Activated CD8-positive, alpha-beta T cell treated with anti-CD3 and anti-CD28 coated beads for 36 hours (primary cell): ENCODE measurements at regions of chr14 and their contacts with region 1.

Region 1: DNA sequence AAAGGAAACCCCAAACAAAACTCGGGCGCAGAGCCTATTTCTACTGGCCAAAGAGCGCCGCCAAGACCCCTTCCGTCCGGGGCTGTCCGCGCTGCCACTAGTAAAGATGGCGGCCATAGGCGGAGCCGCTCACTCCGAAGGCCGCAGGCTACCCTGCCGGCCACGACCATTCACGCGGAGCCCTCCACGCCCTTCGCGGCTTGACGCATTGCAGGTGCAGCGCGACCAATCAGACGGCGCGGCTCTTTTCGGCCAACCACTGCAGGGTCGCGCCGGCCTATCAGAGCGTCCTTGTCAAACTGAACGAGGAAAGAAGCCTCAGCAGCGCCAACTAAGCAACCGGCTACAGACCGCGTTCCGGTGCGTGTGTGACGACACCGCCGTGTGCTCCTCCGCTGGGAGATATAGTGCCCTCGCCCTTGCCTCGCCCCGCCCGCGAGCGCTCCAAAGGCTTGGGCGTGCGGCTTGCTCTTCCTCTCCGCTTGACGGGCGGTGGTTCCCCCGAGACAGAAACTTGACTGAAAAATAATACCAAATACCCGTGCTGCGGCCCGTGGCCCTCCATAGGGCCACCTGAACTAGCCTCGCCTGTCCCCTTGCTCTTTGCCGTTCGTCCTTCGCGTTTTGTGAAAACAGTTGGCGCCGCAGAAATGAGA is 13.6 kb upstream of the CALM1 start:
- DNase-seq: peak; percentile 99
- ATAC-seq: peak; percentile 89
- H3K4me3 Mint-ChIP-seq: no peak overlapping the region
- H3K27ac Mint-ChIP-seq: no peak overlapping the region
- H3K4me1 Mint-ChIP-seq: peaks cover 18% of the 10 kb centered on the region
- H3K27me3 Mint-ChIP-seq: no peaks in the 10 kb centered on the region
- CTCF ChIP-seq: no peak

Region 2: DNA sequence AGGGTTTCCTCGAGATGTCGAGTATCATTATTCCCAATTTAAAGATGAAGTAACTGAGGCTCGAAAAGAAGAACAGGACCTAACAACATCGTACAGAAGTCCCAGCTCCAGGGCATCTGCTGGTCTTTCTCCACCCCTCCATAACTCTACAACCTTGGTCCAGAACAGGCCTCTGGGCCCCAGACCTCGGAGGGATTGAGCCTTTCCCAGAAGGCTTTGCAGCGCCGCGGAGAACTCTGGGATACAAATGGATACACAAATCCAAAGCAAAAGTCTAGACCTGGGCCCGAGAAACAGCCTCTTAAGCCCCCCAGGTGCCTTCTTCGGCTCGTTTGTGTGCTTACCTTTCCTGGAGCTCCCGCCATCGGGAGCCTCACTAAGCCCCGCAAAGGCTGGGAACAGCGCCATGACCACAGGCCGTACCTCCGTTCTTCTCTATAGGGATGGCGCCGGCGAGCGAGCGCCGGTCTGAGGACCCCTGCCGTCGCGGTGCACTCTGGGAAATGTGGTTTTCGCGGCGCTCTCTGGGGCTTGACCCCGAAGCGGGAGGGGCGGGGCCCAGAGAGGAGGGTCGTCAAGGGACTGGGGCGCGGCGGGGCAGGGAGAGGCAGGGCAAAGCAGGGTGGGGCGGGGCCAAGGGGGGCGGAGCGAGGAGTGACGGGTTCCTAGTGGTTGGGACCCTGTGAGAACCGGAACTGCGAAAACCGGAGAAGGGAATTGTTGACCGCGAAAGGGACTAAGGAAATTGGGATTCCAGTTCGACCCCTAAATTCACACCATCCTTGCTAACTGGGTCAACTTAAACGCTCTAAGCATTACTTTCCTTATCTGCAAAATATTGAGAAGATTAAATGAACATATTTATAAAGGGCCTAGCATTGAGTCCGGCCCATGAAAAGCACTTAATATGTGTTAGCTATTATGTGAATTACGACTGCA is 51.4 kb before region 1 on chr14 and contains the start of gene NRDE2:
- CTCF ChIA-PET with region 1: interaction called, 4 read pairs
- POLR2A ChIA-PET with region 1: interaction called, 22 read pairs
- intact Hi-C with region 1: loop called (anchors 1 kb)
- DNase-seq: peak; percentile 99
- ATAC-seq: peak; percentile 99
- H3K4me3 Mint-ChIP-seq: peak within 1 kb of the TSS; percentile 92
- H3K27ac Mint-ChIP-seq: peak within 1 kb of the TSS; percentile 92
- H3K4me1 Mint-ChIP-seq: peaks cover 28% of the 10 kb centered on the region
- H3K27me3 Mint-ChIP-seq: peaks cover 3% of the 10 kb centered on the region
- CTCF ChIP-seq: no peak
- total RNA-seq, gene NRDE2: 19.2 to 21.0 TPM

Region 3: GRCh38 chr14:90426663-90427062 is 43.5 kb after region 1 on chr14:
- CTCF ChIA-PET with region 1: no interaction called
- POLR2A ChIA-PET with region 1: no interaction called
- intact Hi-C with region 1: no loop called
- DNase-seq: no peak
- ATAC-seq: no peak
- H3K4me3 Mint-ChIP-seq: no peak overlapping the region
- H3K27ac Mint-ChIP-seq: no peak overlapping the region
- H3K4me1 Mint-ChIP-seq: no peaks in the 10 kb centered on the region
- H3K27me3 Mint-ChIP-seq: no peaks in the 10 kb centered on the region
- CTCF ChIP-seq: no peak

Region 4: GRCh38 chr14:90642244-90642717 is 259.1 kb after region 1 on chr14:
- CTCF ChIA-PET with region 1: no interaction called
- POLR2A ChIA-PET with region 1: no interaction called
- intact Hi-C with region 1: no loop called
- DNase-seq: no peak
- ATAC-seq: no peak
- H3K4me3 Mint-ChIP-seq: no peak overlapping the region
- H3K27ac Mint-ChIP-seq: no peak overlapping the region
- H3K4me1 Mint-ChIP-seq: no peaks in the 10 kb centered on the region
- H3K27me3 Mint-ChIP-seq: no peaks in the 10 kb centered on the region
- CTCF ChIP-seq: no peak